ENCODE measurements at regions of chr3 and their contacts with region 1.

Region 1: DNA sequence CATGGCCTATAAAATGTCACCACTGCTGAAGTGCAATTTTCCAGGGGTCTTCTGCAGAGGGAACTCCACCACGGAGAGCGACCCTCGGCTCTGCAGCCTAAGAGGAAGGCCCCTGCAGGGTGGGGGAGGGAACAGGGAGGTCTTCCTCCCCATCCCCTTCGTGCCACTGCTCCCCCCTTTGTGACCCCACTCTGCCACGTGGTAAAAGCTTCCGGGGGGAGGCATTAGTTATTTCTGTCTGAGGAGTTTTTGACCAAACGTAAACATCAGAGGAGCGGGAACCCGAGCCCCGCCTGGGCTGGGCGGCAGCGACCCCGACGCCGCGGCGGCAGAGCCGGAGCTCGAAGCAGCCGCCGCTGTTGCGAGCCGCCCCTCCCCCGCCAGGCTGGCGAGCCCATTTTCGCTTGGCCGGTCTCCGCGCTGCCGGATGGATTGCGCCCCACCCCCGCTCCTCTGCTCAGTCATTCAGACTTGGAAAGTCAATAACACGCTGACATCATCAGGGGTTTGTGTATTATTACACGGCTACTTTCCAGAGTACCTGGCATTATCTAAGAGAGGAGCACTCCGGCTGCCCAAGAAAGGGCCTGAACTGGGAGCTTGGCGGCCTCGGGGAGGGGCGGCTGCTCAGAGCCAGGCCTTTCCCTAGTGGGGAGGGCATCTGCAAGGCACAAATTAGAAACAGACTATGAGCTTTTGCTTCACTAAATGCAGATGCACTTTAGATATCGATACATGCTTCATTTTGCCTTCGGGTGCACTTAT is 162.5 kb upstream of the TBL1XR1 start:
- DNase-seq: peak; percentile 98
- H3K4me3 ChIP-seq: peak overlapping the region; percentile 49
- H3K27ac ChIP-seq: peak overlapping the region; percentile 96
- H3K4me1 ChIP-seq: peaks cover 70% of the 10 kb centered on the region
- H3K27me3 ChIP-seq: no peaks in the 10 kb centered on the region
- CTCF ChIP-seq: no peak

Region 2: DNA sequence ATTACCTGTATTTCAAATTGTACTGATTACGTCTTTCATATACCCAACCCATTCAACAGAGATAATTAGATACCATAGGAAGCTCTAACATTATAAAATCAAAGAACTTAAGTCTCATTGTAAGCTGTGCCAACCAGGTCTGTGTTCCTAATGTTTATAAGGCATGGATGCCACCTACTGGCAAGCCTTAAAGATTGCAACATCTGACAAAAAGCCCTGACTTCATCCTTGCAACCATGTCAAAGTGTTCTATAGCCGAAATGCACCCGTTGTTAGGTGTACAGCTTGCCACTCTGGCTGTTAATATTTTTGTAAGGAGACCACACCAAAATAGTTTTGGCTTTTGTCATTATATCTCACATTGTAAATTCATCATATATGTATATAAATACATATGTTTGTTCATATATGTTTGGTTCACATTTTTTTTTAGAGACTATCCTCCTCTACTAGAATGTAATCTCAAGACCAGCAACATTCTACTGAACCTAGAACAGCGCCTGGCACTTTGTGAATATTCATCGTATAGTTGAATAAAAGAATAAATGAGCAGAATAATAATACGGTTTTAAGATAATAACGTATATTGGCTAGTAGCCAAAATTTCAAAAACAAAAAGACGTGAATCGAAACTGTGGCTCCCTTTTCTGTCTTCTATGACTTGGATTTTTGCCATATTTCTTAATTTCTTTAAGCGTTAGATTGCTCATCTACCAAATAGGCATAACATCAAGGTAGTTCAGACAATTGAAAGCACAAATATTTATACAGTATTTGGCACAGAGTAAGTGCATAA is 420.6 kb before region 1 on chr3:
- CTCF ChIA-PET with region 1: no interaction called
- POLR2A ChIA-PET with region 1: no interaction called
- intact Hi-C with region 1: no loop called
- DNase-seq: peak; percentile 47 to 76
- H3K4me3 ChIP-seq: no peak overlapping the region
- H3K27ac ChIP-seq: no peak overlapping the region
- H3K4me1 ChIP-seq: no peaks in the 10 kb centered on the region; the same call in 1 of the 2 replicates
- H3K27me3 ChIP-seq: no peaks in the 10 kb centered on the region
- CTCF ChIP-seq: peak; percentile 98

Region 3: DNA sequence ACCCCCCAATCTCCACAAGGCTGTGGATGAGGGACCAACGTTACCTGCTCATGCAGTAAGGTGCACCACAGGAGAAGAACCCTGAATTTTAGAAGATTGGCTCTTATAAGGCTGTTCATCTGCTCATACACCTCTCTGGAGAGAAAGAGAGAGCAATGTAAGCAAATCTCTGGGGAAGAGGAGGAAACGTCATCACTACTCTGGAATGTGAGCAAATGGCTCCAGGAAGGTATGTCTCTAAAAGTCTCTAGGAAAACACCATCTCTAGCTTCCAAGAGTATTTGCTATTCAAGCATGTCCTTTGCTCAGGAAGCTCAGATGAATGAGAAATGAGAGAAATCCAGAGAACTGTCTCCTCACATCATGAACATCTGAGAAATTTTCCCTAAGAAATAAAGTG is 397.9 kb before region 1 on chr3:
- CTCF ChIA-PET with region 1: no interaction called
- POLR2A ChIA-PET with region 1: no interaction called
- intact Hi-C with region 1: loop called (anchors 10 kb)
- DNase-seq: no peak
- H3K4me3 ChIP-seq: no peak overlapping the region
- H3K27ac ChIP-seq: no peak overlapping the region
- H3K4me1 ChIP-seq: no peaks in the 10 kb centered on the region
- H3K27me3 ChIP-seq: no peaks in the 10 kb centered on the region
- CTCF ChIP-seq: no peak

Region 4: DNA sequence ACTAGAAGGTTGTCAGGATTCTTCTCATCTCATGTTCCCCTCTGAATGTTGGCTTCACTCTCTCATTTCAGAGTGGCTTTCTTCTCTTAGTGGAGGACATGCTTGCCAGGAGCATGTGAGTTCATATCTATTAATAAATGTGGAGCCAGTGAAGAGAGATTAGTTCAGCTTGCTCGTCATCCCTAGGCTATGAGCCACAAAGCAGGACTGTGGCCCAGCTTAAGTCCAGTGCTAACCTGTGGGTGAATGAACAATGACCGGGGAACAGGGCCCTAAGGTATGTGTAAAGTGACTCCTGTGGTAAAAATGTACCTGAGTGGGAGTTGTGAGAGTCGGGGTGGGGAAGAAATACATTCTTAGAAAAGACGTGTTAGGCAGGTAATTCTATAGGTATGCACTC is 65.6 kb before region 1 on chr3:
- CTCF ChIA-PET with region 1: no interaction called
- POLR2A ChIA-PET with region 1: interaction called, 12 read pairs
- intact Hi-C with region 1: loop called (anchors 1 kb)
- DNase-seq: peak; percentile 69 to 71
- H3K4me3 ChIP-seq: no peak overlapping the region
- H3K27ac ChIP-seq: peak overlapping the region; percentile 57; the same call in 1 of the 2 replicates
- H3K4me1 ChIP-seq: peaks cover 23% of the 10 kb centered on the region
- H3K27me3 ChIP-seq: no peaks in the 10 kb centered on the region
- CTCF ChIP-seq: no peak

Region 5: DNA sequence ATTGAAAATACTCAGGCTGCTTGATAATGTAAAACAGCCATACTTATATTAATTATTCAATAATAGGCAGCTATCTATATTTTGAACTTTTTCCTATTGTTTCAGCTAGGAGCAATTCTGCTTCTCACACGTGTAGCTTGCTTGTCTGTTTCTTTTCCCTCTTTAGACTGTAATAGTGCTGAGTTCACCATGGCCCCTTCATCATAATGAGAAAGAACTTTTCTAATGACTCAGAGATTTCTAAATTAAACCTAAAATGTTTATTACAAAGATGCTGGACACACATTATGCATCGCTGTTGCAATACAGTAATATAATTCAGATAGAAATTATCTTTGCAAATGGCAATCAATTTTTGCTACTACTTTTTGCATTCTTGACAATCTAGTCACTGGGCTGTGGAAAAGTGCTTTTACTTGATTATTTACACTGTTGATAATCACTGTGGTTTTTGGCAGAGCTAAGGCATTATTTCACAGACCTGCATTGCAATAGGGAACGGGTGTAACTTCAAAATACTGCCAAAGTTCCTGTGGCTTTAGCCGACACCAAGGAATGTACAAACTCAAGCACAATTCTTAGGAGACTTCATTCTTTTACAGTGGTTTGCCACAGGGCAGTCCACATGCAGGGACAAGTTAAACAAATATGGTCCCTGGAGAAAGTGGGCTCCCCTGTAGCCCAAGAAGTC is 118.5 kb after region 1 on chr3:
- CTCF ChIA-PET with region 1: no interaction called
- POLR2A ChIA-PET with region 1: interaction called, 11 read pairs
- intact Hi-C with region 1: loop called (anchors 1 kb)
- DNase-seq: peak; percentile 84 to 100
- H3K4me3 ChIP-seq: no peak overlapping the region
- H3K27ac ChIP-seq: peak overlapping the region; percentile 85
- H3K4me1 ChIP-seq: peaks cover 33% of the 10 kb centered on the region
- H3K27me3 ChIP-seq: no peaks in the 10 kb centered on the region
- CTCF ChIP-seq: no peak

Region 6: GRCh38 chr3:177751770-177752169 is 392.0 kb after region 1 on chr3:
- CTCF ChIA-PET with region 1: no interaction called
- POLR2A ChIA-PET with region 1: interaction called, 28 read pairs
- intact Hi-C with region 1: no loop called
- DNase-seq: no peak
- H3K4me3 ChIP-seq: no peak overlapping the region
- H3K27ac ChIP-seq: no peak overlapping the region
- H3K4me1 ChIP-seq: peaks cover 11% of the 10 kb centered on the region
- H3K27me3 ChIP-seq: no peaks in the 10 kb centered on the region
- CTCF ChIP-seq: no peak

Region 7: DNA sequence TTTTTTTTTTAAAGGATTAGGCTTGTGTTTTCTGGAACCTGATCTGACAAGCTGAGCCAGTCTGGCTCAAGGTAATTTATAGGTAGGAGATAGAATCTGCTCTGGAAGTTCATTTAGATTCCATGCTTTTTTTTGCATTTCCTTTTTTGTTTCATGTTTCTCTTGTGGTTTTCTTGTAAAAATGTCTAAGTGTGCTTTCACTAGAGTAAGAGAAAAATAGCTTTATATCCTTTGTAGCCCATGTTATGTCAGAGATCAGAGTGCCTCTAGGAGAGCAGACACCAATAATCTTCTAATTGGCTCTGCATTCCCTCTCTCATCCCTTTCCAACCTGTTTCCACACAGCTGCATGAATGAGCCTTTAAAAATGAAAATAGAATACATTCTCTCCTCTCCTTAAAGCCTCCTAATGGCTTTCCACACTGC is 786.6 kb after region 1 on chr3:
- CTCF ChIA-PET with region 1: no interaction called
- POLR2A ChIA-PET with region 1: no interaction called
- intact Hi-C with region 1: loop called (anchors 5 kb)
- DNase-seq: no peak
- H3K4me3 ChIP-seq: no peak overlapping the region
- H3K27ac ChIP-seq: no peak overlapping the region
- H3K4me1 ChIP-seq: peaks cover 7% of the 10 kb centered on the region
- H3K27me3 ChIP-seq: no peaks in the 10 kb centered on the region
- CTCF ChIP-seq: no peak